Ascending aorta (tissue), 2 donors: ENCODE measurements at regions of chr5 and their contacts with region 1.

Region 1: DNA sequence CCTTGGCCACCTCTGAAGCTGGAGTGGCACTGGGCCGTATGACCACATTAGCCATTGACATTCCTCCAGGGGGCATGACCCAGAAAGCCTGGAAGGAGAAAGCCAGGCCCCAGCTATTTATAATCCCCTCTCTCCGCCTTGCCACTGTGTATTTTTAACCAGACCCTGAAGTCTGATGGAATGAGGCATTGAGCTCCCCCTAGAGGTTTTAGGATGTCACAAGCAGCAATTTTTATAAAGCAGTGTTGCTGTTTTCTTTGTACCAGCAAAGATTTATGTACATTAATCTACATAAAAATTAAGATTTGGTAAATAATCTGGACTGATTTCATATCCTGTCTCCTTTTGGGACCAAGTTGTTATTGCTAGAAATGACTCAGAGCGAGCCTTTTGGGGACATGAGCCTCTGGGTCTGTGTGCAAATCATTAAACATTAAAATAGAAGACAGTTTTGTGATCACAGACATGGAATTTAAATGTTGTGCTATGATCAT is 127.1 kb downstream of the TRIO start:
- DNase-seq: peak in 1 of 2 donors; percentile 87
- H3K4me3 ChIP-seq: no peak overlapping the region
- H3K27ac ChIP-seq: peak overlapping the region; percentile 64 to 69
- H3K4me1 ChIP-seq: peaks cover 16 to 37% of the 10 kb centered on the region in 2 donors
- H3K27me3 ChIP-seq: no peaks in the 10 kb centered on the region
- CTCF ChIP-seq: peak; percentile 66 to 76 (median 76)

Region 2: DNA sequence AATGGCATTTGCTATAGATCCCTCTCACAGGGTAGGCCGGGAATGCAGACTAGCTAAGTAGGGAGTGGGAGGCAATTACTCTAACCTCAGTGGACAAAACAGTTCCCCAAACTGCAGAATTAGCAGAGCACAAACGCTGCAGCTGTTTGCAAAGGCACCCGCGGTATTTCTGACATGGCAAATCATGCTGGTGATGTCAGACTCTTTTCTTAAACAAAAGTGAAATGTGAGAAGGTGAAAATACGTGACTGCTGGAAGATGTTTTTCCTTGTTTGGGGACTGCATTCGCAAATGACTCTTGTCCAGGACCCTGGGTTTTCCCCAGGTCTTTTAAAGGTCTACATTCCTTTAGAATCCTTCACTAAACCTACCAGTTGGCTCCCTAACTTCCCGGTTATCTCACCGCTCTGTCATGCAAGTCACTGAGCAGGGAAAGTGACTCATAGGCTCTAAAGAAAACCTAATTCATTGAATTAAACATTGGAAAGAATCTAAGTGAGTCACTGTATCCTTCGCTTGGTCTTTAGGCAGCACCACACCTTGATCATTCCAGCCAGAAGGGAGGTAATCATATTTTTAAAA is 234.3 kb before region 1 on chr5:
- intact Hi-C with region 1: loop called (anchors 5 kb)
- DNase-seq: peak in 1 of 2 donors; percentile 76
- H3K4me3 ChIP-seq: peak overlapping the region in 1 of 2 donors; percentile 46
- H3K27ac ChIP-seq: peak overlapping the region; percentile 11 to 76
- H3K4me1 ChIP-seq: peaks cover 5 to 19% of the 10 kb centered on the region in 2 donors
- H3K27me3 ChIP-seq: no peaks in the 10 kb centered on the region
- CTCF ChIP-seq: no peak

Region 3: GRCh38 chr5:14108170-14108996 is 161.9 kb before region 1 on chr5:
- intact Hi-C with region 1: loop called (anchors 1 kb)
- DNase-seq: peak in 1 of 2 donors; percentile 77
- H3K4me3 ChIP-seq: peak overlapping the region; percentile 0 to 50
- H3K27ac ChIP-seq: peak overlapping the region; percentile 19 to 27
- H3K4me1 ChIP-seq: peaks cover 2% of the 10 kb centered on the region in 2 donors
- H3K27me3 ChIP-seq: no peaks in the 10 kb centered on the region
- CTCF ChIP-seq: peak; percentile 40 to 83 (median 79)